ENCODE measurements at regions of chr13 and their contacts with region 1.

Region 1: GRCh38 chr13:26872525-26873385 is 112.2 kb upstream of the GPR12 start:
- DNase-seq: peak; percentile 29
- H3K4me3 ChIP-seq: no peak overlapping the region
- H3K27ac ChIP-seq: no peak overlapping the region
- H3K4me1 ChIP-seq: no peaks in the 10 kb centered on the region
- H3K27me3 ChIP-seq: no peaks in the 10 kb centered on the region
- CTCF ChIP-seq: peak; percentile 76 to 83
- POLR2A ChIP-seq: no peak

Region 2: GRCh38 chr13:26482451-26483197 is 390.1 kb before region 1 on chr13:
- CTCF ChIA-PET with region 1: no interaction called
- POLR2A ChIA-PET with region 1: no interaction called
- dilution Hi-C with region 1: no loop called
- intact Hi-C with region 1: loop called (anchors 5 kb)
- DNase-seq: peak; percentile 79
- H3K4me3 ChIP-seq: peak overlapping the region in 1 of 3 experiments; percentile 40
- H3K27ac ChIP-seq: no peak overlapping the region
- H3K4me1 ChIP-seq: peaks cover 2% of the 10 kb centered on the region
- H3K27me3 ChIP-seq: no peaks in the 10 kb centered on the region
- CTCF ChIP-seq: peak; percentile 80 to 85
- POLR2A ChIP-seq: no peak

Region 3: DNA sequence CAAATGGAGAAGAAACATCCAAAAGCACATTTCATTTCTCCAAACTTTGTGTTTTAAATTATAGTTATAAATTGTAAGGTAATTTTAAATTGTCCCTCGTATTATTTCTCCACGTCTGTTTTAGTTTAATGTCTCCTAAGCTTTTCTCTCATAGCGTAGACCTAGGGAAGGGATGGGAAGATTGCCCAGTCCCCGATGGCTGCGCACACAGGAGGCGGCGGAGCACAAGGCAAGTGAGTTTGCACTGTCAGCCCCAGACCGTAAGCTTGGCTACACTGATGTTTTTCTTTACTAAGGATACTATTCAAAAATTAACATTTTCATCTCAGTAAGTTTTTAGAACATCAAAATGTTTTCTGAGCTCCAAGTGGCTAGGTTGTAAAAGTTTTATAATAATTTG is 184.5 kb before region 1 on chr13:
- CTCF ChIA-PET with region 1: no interaction called
- POLR2A ChIA-PET with region 1: no interaction called
- dilution Hi-C with region 1: no loop called
- intact Hi-C with region 1: no loop called
- DNase-seq: no peak
- H3K4me3 ChIP-seq: no peak overlapping the region
- H3K27ac ChIP-seq: no peak overlapping the region
- H3K4me1 ChIP-seq: no peaks in the 10 kb centered on the region
- H3K27me3 ChIP-seq: no peaks in the 10 kb centered on the region
- CTCF ChIP-seq: no peak
- POLR2A ChIP-seq: no peak

Region 4: DNA sequence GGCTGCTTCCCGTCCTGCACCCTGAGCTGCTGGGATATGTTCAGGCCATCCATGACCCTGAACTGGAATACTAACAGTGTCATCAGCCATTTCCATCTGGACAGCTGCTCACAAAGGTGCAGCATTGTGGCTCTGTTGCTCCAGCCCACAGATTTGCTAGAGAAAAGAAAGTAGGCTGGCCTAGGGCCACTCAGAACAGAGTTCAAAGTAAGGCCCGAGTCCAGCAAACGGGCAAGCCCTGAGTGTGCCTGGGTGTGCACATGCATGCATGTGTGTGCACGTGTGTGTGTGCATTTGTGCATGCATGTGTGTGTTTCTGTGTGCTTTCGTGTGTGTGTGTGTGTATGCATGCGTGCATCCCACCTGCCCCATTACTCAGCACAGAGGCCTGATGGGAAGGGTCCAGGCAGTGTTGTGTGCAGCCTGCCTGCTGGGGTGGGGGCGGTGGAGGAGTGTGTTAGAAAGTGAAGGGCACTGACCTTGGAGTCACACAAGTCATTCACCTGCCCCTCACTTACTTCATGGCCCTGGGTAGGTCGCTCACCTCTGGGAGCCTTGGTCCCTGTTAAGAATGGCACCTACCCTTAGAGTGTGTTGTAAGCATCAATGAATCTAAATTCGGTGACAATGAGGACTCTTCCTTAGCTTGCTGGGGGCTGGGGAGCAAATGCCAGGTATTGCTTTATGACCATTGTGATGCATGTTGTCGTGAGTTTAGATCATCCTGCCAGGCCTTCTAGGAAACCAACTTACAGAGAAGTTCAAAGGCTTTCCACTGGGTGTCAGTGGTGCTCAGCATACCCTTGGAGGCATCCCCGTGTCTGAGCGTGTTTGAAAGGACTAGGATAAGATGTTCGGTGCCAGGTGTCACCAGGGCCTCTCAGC is 165.4 kb before region 1 on chr13:
- CTCF ChIA-PET with region 1: interaction called, 47 read pairs
- POLR2A ChIA-PET with region 1: no interaction called
- dilution Hi-C with region 1: no loop called
- intact Hi-C with region 1: loop called (anchors 1 kb)
- DNase-seq: peak; percentile 41
- H3K4me3 ChIP-seq: no peak overlapping the region
- H3K27ac ChIP-seq: no peak overlapping the region
- H3K4me1 ChIP-seq: no peaks in the 10 kb centered on the region
- H3K27me3 ChIP-seq: peaks cover 0 to 8% of the 10 kb centered on the region in 2 experiments
- CTCF ChIP-seq: peak; percentile 29 to 60
- POLR2A ChIP-seq: no peak

Region 5: GRCh38 chr13:26847281-26847680 is 25.5 kb before region 1 on chr13:
- CTCF ChIA-PET with region 1: interaction called, 13 read pairs
- POLR2A ChIA-PET with region 1: no interaction called
- dilution Hi-C with region 1: no loop called
- intact Hi-C with region 1: no loop called
- DNase-seq: no peak
- H3K4me3 ChIP-seq: no peak overlapping the region
- H3K27ac ChIP-seq: no peak overlapping the region
- H3K4me1 ChIP-seq: no peaks in the 10 kb centered on the region
- H3K27me3 ChIP-seq: peaks cover 0 to 2% of the 10 kb centered on the region in 2 experiments
- CTCF ChIP-seq: no peak
- POLR2A ChIP-seq: no peak

Region 6: DNA sequence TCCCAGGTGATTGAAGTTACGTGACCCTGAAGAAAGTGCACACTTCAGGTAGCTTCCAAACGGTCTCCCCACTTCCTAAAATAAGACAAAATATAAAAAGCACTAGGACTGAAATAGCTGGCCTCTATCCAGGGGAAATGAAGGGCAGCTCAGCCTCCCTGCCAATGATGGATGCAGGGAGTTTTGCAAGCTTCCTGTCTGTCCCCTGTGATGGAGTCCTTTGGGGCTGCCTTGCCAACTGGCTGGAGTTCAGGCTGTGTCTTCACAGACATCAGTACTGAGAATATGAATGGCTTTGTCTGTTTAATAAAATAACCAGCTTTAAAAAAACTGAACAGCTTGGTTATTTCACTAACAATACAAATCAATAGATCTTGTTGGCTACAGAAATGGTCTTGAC is 10.8 kb before region 1 on chr13:
- CTCF ChIA-PET with region 1: interaction called, 27 read pairs
- POLR2A ChIA-PET with region 1: no interaction called
- dilution Hi-C with region 1: no loop called
- intact Hi-C with region 1: no loop called
- DNase-seq: no peak
- H3K4me3 ChIP-seq: no peak overlapping the region
- H3K27ac ChIP-seq: no peak overlapping the region
- H3K4me1 ChIP-seq: no peaks in the 10 kb centered on the region
- H3K27me3 ChIP-seq: no peaks in the 10 kb centered on the region
- CTCF ChIP-seq: no peak
- POLR2A ChIP-seq: no peak

Region 7: GRCh38 chr13:26887594-26887993 is 14.8 kb after region 1 on chr13:
- CTCF ChIA-PET with region 1: interaction called, 18 read pairs
- POLR2A ChIA-PET with region 1: interaction called, 7 read pairs
- dilution Hi-C with region 1: no loop called
- intact Hi-C with region 1: no loop called
- DNase-seq: no peak
- H3K4me3 ChIP-seq: no peak overlapping the region
- H3K27ac ChIP-seq: no peak overlapping the region
- H3K4me1 ChIP-seq: no peaks in the 10 kb centered on the region
- H3K27me3 ChIP-seq: no peaks in the 10 kb centered on the region
- CTCF ChIP-seq: no peak
- POLR2A ChIP-seq: no peak

Region 8: GRCh38 chr13:26929971-26930730 is 57.4 kb after region 1 on chr13:
- CTCF ChIA-PET with region 1: interaction called, 3 read pairs
- POLR2A ChIA-PET with region 1: no interaction called
- dilution Hi-C with region 1: no loop called
- intact Hi-C with region 1: loop called (anchors 1 kb)
- DNase-seq: peak; percentile 67
- H3K4me3 ChIP-seq: no peak overlapping the region
- H3K27ac ChIP-seq: no peak overlapping the region
- H3K4me1 ChIP-seq: no peaks in the 10 kb centered on the region
- H3K27me3 ChIP-seq: peaks cover 3% of the 10 kb centered on the region in 2 experiments
- CTCF ChIP-seq: peak; percentile 89 to 95
- POLR2A ChIP-seq: no peak